ENCODE measurements at regions of chr2 and their contacts with region 1.

Region 1: GRCh38 chr2:220259662-220260061 is 632.2 kb downstream of the SLC4A3 start:
- DNase-seq: no peak
- ATAC-seq: no peak
- H3K4me3 Mint-ChIP-seq: no peak overlapping the region
- H3K27ac Mint-ChIP-seq: no peak overlapping the region
- H3K4me1 Mint-ChIP-seq: no peaks in the 10 kb centered on the region
- H3K27me3 Mint-ChIP-seq: no peaks in the 10 kb centered on the region
- CTCF ChIP-seq: no peak

Region 2: DNA sequence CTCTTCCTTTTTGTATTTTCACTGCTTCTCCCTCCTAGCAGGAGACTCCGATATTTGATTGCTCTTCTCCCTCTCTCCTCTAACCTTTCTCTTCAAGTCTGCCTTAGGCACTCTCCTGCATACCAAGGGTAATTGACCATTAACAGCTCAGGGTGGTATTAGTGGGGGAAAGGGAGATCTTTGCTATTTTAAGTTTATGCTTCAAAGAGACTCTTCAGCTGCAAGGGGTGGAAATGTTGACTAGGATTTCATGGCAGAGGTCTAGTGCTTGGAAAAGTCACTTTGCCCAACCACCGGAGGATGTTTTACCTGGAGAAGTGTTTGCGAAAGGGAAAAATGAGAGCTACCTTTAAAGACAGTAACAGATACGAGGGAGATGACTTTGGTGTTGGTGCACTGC is 178.5 kb before region 1 on chr2:
- CTCF ChIA-PET with region 1: no interaction called
- POLR2A ChIA-PET with region 1: no interaction called
- intact Hi-C with region 1: no loop called
- DNase-seq: no peak
- ATAC-seq: no peak
- H3K4me3 Mint-ChIP-seq: no peak overlapping the region
- H3K27ac Mint-ChIP-seq: no peak overlapping the region
- H3K4me1 Mint-ChIP-seq: no peaks in the 10 kb centered on the region
- H3K27me3 Mint-ChIP-seq: peaks cover 4% of the 10 kb centered on the region
- CTCF ChIP-seq: no peak

Region 3: GRCh38 chr2:220310451-220310861 is 50.8 kb after region 1 on chr2:
- CTCF ChIA-PET with region 1: no interaction called
- POLR2A ChIA-PET with region 1: no interaction called
- intact Hi-C with region 1: no loop called
- DNase-seq: no peak
- ATAC-seq: no peak
- H3K4me3 Mint-ChIP-seq: no peak overlapping the region
- H3K27ac Mint-ChIP-seq: no peak overlapping the region
- H3K4me1 Mint-ChIP-seq: no peaks in the 10 kb centered on the region
- H3K27me3 Mint-ChIP-seq: no peaks in the 10 kb centered on the region
- CTCF ChIP-seq: no peak

Region 4: GRCh38 chr2:220619558-220620217 is 360.0 kb after region 1 on chr2:
- CTCF ChIA-PET with region 1: no interaction called
- POLR2A ChIA-PET with region 1: no interaction called
- intact Hi-C with region 1: loop called (anchors 5 kb)
- DNase-seq: no peak
- ATAC-seq: no peak
- H3K4me3 Mint-ChIP-seq: no peak overlapping the region
- H3K27ac Mint-ChIP-seq: no peak overlapping the region
- H3K4me1 Mint-ChIP-seq: no peaks in the 10 kb centered on the region
- H3K27me3 Mint-ChIP-seq: no peaks in the 10 kb centered on the region
- CTCF ChIP-seq: no peak

Measured in activated CD8-positive, alpha-beta T cell treated with anti-CD3 and anti-CD28 coated beads for 36 hours (primary cell).